ENCODE measurements at regions of chr1 and their contacts with region 1.

Region 1: DNA sequence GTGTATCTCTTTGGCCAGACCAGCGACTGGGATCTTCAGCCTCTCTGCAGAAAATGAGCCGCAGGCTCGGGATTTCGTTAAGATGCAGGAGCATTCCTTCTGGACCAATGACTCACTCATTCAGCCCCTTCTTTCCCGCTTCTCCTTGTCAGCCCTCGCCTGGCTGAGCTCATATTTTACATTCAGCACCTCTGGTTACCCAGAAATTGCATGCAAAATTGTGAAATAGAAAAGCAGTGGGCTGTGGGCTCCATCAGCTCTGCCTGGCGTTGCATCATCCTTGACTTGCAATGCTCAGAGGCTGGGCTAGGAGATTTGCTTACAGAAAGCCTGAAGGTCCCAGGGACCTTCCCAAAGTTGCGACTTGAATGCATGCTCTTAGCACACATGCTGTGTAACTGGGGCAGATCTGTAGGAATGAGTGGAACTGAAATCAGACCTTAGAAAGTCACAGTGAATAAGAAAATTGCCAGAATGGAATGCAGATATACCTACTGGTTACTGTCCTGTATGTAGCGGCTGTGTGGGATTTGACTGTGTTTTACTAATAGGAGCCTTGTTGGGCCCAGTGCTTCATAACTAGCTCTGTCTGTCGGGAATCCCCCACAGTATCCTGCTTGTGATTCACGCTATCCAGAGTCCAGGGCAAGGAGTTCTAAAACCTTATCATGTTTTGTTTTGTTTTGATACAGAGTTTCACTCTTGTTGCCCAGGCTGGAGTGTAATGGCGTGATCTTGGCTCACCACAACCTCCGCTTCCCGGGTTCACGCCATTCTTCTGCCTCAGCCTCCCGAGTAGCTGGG is 444.8 kb downstream of the KIF26B start:
- DNase-seq: peak; percentile 94
- ATAC-seq: peak; percentile 95
- H3K4me3 ChIP-seq: no peak overlapping the region
- H3K27ac ChIP-seq: peak overlapping the region; percentile 89; the same call in 1 of the 2 replicates
- H3K4me1 ChIP-seq: peaks cover 11% of the 10 kb centered on the region
- H3K27me3 ChIP-seq: no peaks in the 10 kb centered on the region
- CTCF ChIP-seq: no peak
- POLR2A ChIP-seq: no peak
- RAD21 ChIP-seq: no peak

Region 2: DNA sequence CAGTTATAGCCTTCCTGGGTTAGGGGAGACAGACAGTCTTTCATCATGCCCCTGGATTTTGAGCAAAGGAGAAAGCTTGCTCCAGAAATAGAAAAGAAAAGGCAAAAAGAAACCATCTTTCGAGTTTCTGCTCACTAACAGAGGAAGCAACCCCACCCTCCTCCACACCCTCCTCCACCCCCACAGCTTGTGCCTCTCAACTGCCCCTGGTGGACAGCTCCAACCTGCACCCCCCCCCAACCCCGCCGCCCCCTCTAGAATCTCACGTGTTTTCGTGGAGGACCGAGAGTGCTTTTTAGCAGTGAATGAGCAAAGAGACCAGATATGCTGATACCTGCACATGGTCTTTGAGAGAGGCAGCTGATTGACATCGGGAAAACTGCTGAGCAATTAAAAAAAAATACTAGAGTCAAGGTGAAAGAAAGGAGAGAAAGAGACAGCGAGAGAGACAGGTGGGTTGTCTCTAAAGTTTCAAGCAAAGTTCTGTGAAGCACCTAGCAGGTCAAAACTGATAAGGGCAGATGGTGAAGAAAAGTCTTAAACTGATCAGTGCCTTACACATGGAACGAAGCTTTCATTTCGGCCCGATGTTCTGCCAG is 86.5 kb before region 1 on chr1:
- CTCF ChIA-PET with region 1: no interaction called
- POLR2A ChIA-PET with region 1: no interaction called
- dilution Hi-C with region 1: no loop called
- in situ Hi-C with region 1: no loop called
- intact Hi-C with region 1: loop called (anchors 5 kb)
- DNase-seq: no peak
- ATAC-seq: no peak
- H3K4me3 ChIP-seq: no peak overlapping the region
- H3K27ac ChIP-seq: no peak overlapping the region
- H3K4me1 ChIP-seq: peaks cover 2% of the 10 kb centered on the region; the same call in 1 of the 2 replicates
- H3K27me3 ChIP-seq: no peaks in the 10 kb centered on the region
- CTCF ChIP-seq: no peak
- POLR2A ChIP-seq: no peak
- RAD21 ChIP-seq: no peak

Region 3: DNA sequence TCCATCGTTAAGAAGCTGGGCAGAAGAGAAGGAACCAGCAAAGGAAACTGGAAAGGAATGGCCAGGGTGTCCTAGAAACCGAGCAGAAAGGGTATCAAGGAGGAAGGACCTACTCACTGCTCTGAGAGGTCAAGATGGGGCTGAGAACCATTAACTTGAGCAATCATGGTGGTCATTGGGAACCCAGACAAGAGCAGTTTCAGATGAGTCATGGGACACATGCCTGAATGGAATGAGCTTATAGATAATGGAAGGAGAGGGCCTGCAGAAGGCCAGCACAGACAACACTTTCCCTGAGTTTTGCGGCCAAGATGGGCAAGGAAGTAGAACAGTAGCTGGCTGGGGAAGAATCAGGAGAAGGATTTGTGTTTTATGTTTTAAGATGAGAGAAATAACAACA is 61.6 kb before region 1 on chr1:
- CTCF ChIA-PET with region 1: interaction called, 12 read pairs
- POLR2A ChIA-PET with region 1: no interaction called
- dilution Hi-C with region 1: no loop called
- in situ Hi-C with region 1: no loop called
- intact Hi-C with region 1: no loop called
- DNase-seq: peak; percentile 55
- ATAC-seq: no peak
- H3K4me3 ChIP-seq: no peak overlapping the region
- H3K27ac ChIP-seq: no peak overlapping the region
- H3K4me1 ChIP-seq: peaks cover 2% of the 10 kb centered on the region; the same call in 1 of the 2 replicates
- H3K27me3 ChIP-seq: no peaks in the 10 kb centered on the region
- CTCF ChIP-seq: no peak
- POLR2A ChIP-seq: no peak
- RAD21 ChIP-seq: no peak

Region 4: DNA sequence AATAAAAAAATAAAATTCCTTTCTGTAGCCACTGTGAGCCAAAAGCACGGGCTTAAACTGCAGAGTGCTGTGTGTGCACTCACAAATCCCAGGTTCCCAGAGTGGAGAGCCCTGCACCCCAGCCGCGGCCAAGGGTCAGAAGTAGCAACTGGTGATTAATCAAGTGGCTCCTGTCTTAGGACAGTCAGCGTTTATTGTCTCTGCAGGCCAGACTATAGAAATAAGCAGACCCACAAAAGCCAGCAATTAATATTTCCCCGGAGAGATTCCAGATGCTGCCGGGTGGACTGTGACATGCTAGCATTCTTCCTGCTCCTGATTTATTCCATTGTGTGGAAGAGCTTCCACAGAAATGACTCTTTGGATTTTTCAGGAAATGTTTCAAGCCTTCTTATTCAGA is 32.6 kb before region 1 on chr1:
- CTCF ChIA-PET with region 1: no interaction called
- POLR2A ChIA-PET with region 1: no interaction called
- dilution Hi-C with region 1: no loop called
- in situ Hi-C with region 1: no loop called
- intact Hi-C with region 1: no loop called
- DNase-seq: no peak
- ATAC-seq: no peak
- H3K4me3 ChIP-seq: no peak overlapping the region
- H3K27ac ChIP-seq: no peak overlapping the region
- H3K4me1 ChIP-seq: peaks cover 4% of the 10 kb centered on the region; the same call in 1 of the 2 replicates
- H3K27me3 ChIP-seq: no peaks in the 10 kb centered on the region; the same call in 1 of the 2 replicates
- CTCF ChIP-seq: no peak
- POLR2A ChIP-seq: no peak
- RAD21 ChIP-seq: no peak

Region 5: GRCh38 chr1:245652660-245653427 is 53.3 kb after region 1 on chr1:
- CTCF ChIA-PET with region 1: no interaction called
- POLR2A ChIA-PET with region 1: no interaction called
- dilution Hi-C with region 1: no loop called
- in situ Hi-C with region 1: no loop called
- intact Hi-C with region 1: no loop called
- DNase-seq: no peak
- ATAC-seq: no peak
- H3K4me3 ChIP-seq: no peak overlapping the region
- H3K27ac ChIP-seq: no peak overlapping the region
- H3K4me1 ChIP-seq: no peaks in the 10 kb centered on the region
- H3K27me3 ChIP-seq: no peaks in the 10 kb centered on the region
- CTCF ChIP-seq: no peak
- POLR2A ChIP-seq: no peak
- RAD21 ChIP-seq: no peak

Region 6: GRCh38 chr1:245771511-245772281 is 172.1 kb after region 1 on chr1:
- CTCF ChIA-PET with region 1: no interaction called
- POLR2A ChIA-PET with region 1: no interaction called
- dilution Hi-C with region 1: no loop called
- in situ Hi-C with region 1: no loop called
- intact Hi-C with region 1: loop called (anchors 10 kb)
- DNase-seq: peak; percentile 91
- ATAC-seq: peak; percentile 86
- H3K4me3 ChIP-seq: no peak overlapping the region
- H3K27ac ChIP-seq: peak overlapping the region; percentile 95
- H3K4me1 ChIP-seq: peaks cover 13% of the 10 kb centered on the region
- H3K27me3 ChIP-seq: no peaks in the 10 kb centered on the region
- CTCF ChIP-seq: no peak
- POLR2A ChIP-seq: no peak
- RAD21 ChIP-seq: 0 out of 2 replicates have a peak, but pooled peaks have one; percentile 7

Region 7: GRCh38 chr1:245800901-245801605 is 201.5 kb after region 1 on chr1:
- CTCF ChIA-PET with region 1: no interaction called
- POLR2A ChIA-PET with region 1: no interaction called
- dilution Hi-C with region 1: no loop called
- in situ Hi-C with region 1: no loop called
- intact Hi-C with region 1: loop called (anchors 5 kb)
- DNase-seq: peak; percentile 80
- ATAC-seq: peak; percentile 70
- H3K4me3 ChIP-seq: no peak overlapping the region
- H3K27ac ChIP-seq: peak overlapping the region; percentile 86; the same call in 1 of the 2 replicates
- H3K4me1 ChIP-seq: peaks cover 19% of the 10 kb centered on the region
- H3K27me3 ChIP-seq: no peaks in the 10 kb centered on the region
- CTCF ChIP-seq: no peak
- POLR2A ChIP-seq: no peak
- RAD21 ChIP-seq: no peak

Region 8: DNA sequence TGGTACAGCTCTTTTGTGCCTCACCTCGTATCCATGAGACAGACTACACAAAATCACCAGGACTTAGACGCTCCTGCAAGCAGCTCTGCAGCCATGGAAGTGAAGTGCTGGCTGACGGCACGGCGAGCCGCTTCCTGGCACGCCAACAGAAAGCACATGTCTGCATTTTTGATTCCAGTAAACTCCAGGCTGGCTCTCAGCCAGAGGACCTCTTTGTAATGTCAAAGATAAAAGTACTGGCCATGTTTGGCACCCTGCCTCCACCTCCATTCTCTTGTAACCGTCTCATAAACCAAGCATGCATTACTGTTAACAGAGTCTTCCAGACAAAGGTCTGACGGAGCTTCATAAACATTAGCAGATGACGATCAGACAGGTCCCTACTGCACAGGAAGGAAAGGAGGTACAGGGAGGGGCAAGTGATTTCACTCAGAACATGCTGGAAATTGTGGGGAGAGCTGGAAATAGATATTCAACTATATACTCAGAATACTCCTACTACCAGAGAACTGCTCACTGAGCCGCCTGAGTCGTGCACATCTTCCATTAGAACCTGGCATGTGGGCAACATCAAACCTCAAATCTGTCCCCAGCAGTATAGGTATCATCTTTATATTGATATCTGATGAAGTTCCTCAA is 275.5 kb after region 1 on chr1:
- CTCF ChIA-PET with region 1: no interaction called
- POLR2A ChIA-PET with region 1: no interaction called
- dilution Hi-C with region 1: no loop called
- in situ Hi-C with region 1: no loop called
- intact Hi-C with region 1: loop called (anchors 10 kb)
- DNase-seq: peak; percentile 100
- ATAC-seq: peak; percentile 74
- H3K4me3 ChIP-seq: no peak overlapping the region
- H3K27ac ChIP-seq: peak overlapping the region; percentile 91
- H3K4me1 ChIP-seq: peaks cover 45% of the 10 kb centered on the region
- H3K27me3 ChIP-seq: no peaks in the 10 kb centered on the region
- CTCF ChIP-seq: no peak
- POLR2A ChIP-seq: no peak
- RAD21 ChIP-seq: peak; percentile 3; the same call in 1 of the 2 replicates

Region 9: DNA sequence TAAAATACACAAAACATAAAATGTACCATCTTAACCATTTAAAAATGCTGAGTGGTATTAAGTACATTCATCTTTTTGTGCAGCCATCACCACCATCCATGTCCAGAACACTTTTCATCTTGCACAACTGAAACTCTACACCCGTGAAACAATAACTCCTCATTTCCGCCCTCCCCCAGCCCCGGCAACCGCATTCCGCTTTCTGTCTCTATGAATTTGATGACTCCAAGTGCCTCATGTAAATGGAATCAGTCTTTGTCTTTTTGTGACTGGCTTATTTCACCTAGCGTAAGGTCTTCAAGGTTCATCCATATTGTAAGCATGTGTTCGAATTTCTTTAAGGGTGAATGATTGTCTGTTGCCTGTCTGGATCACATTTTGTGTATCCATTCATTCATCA is 1161.8 kb after region 1 on chr1:
- CTCF ChIA-PET with region 1: no interaction called
- POLR2A ChIA-PET with region 1: no interaction called
- dilution Hi-C with region 1: no loop called
- in situ Hi-C with region 1: no loop called
- intact Hi-C with region 1: no loop called
- DNase-seq: peak; percentile 5
- ATAC-seq: no peak
- H3K4me3 ChIP-seq: no peak overlapping the region
- H3K27ac ChIP-seq: no peak overlapping the region
- H3K4me1 ChIP-seq: no peaks in the 10 kb centered on the region
- H3K27me3 ChIP-seq: no peaks in the 10 kb centered on the region
- CTCF ChIP-seq: no peak
- POLR2A ChIP-seq: no peak
- RAD21 ChIP-seq: no peak